ENCODE measurements at regions of chr10 and their contacts with region 1.

Region 1: GRCh38 chr10:100481462-100482081 is 18.8 kb downstream of the WNT8B start:
- DNase-seq: peak; percentile 93
- ATAC-seq: peak; percentile 94
- H3K4me3 Mint-ChIP-seq: peak overlapping the region; percentile 79
- H3K27ac Mint-ChIP-seq: peak overlapping the region; percentile 74
- H3K4me1 Mint-ChIP-seq: peaks cover 38% of the 10 kb centered on the region
- H3K27me3 Mint-ChIP-seq: peaks cover 13% of the 10 kb centered on the region

Region 2: GRCh38 chr10:100254191-100254590 is 227.4 kb before region 1 on chr10:
- CTCF ChIA-PET with region 1: no interaction called
- POLR2A ChIA-PET with region 1: no interaction called
- DNase-seq: no peak
- ATAC-seq: no peak
- H3K4me3 Mint-ChIP-seq: no peak overlapping the region
- H3K27ac Mint-ChIP-seq: no peak overlapping the region
- H3K4me1 Mint-ChIP-seq: no peaks in the 10 kb centered on the region
- H3K27me3 Mint-ChIP-seq: no peaks in the 10 kb centered on the region

Region 3: GRCh38 chr10:100433253-100434240 is 48.0 kb before region 1 on chr10:
- CTCF ChIA-PET with region 1: interaction called, 37 read pairs
- POLR2A ChIA-PET with region 1: interaction called, 3 read pairs
- DNase-seq: peak; percentile 99
- ATAC-seq: peak; percentile 96
- H3K4me3 Mint-ChIP-seq: no peak overlapping the region
- H3K27ac Mint-ChIP-seq: no peak overlapping the region
- H3K4me1 Mint-ChIP-seq: peaks cover 15% of the 10 kb centered on the region
- H3K27me3 Mint-ChIP-seq: no peaks in the 10 kb centered on the region

Region 4: GRCh38 chr10:100448951-100449350 is 32.6 kb before region 1 on chr10:
- CTCF ChIA-PET with region 1: interaction called, 14 read pairs
- POLR2A ChIA-PET with region 1: no interaction called
- DNase-seq: no peak
- ATAC-seq: no peak
- H3K4me3 Mint-ChIP-seq: no peak overlapping the region
- H3K27ac Mint-ChIP-seq: no peak overlapping the region
- H3K4me1 Mint-ChIP-seq: no peaks in the 10 kb centered on the region
- H3K27me3 Mint-ChIP-seq: peaks cover 3% of the 10 kb centered on the region

Region 5: GRCh38 chr10:100470367-100470766 is 11.2 kb before region 1 on chr10:
- CTCF ChIA-PET with region 1: interaction called, 18 read pairs
- POLR2A ChIA-PET with region 1: no interaction called
- DNase-seq: no peak
- ATAC-seq: no peak
- H3K4me3 Mint-ChIP-seq: no peak overlapping the region
- H3K27ac Mint-ChIP-seq: no peak overlapping the region
- H3K4me1 Mint-ChIP-seq: no peaks in the 10 kb centered on the region
- H3K27me3 Mint-ChIP-seq: peaks cover 6% of the 10 kb centered on the region

Region 6: DNA sequence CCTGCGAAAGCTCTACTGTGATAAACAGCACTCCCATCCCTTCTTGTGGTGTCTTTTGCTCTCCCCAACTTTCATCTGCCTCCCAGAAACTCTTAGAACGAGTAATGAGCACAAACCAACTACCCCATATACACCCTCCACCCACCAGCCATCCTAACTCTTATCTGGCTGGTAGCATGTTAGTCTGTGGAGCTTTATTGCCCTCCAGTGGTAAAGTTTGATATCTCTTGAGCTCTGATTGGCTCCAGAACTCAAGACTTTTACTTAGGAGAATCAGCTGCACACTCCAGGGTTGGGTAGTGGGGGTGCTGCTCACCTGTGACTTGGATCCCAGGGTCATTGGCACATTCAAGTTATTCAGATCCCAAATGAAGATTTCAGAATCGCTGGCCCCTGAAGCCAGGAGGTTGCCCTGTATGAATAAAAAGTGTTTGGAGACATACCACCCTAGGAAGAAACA is 27.1 kb after region 1 on chr10:
- CTCF ChIA-PET with region 1: interaction called, 253 read pairs
- POLR2A ChIA-PET with region 1: interaction called, 102 read pairs
- DNase-seq: peak; percentile 80
- ATAC-seq: peak; percentile 58
- H3K4me3 Mint-ChIP-seq: peak overlapping the region; percentile 78
- H3K27ac Mint-ChIP-seq: peak overlapping the region; percentile 94
- H3K4me1 Mint-ChIP-seq: peaks cover 87% of the 10 kb centered on the region
- H3K27me3 Mint-ChIP-seq: no peaks in the 10 kb centered on the region

Region 7: GRCh38 chr10:100529475-100530298 is 48.1 kb after region 1 on chr10 and contains the start of gene NDUFB8:
- CTCF ChIA-PET with region 1: interaction called, 35 read pairs
- POLR2A ChIA-PET with region 1: interaction called, 3 read pairs
- DNase-seq: peak; percentile 92
- ATAC-seq: peak; percentile 89
- H3K4me3 Mint-ChIP-seq: peak within 1 kb of the TSS; percentile 100
- H3K27ac Mint-ChIP-seq: peak within 1 kb of the TSS; percentile 99
- H3K4me1 Mint-ChIP-seq: peaks cover 44% of the 10 kb centered on the region
- H3K27me3 Mint-ChIP-seq: no peaks in the 10 kb centered on the region
- total RNA-seq, gene NDUFB8: 290 to 293 TPM

Measured in activated CD8-positive, alpha-beta T cell treated with anti-CD3 and anti-CD28 coated beads, Interleukin-2, amount 10 ng/mL, durations not matched to agents 7 days and 5 days (primary cell).